SK-N-SH (cell line): ENCODE measurements at regions of chr7 and their contacts with region 1.

Region 1: GRCh38 chr7:76179686-76180085 is 22.0 kb upstream of the SRRM3 start:
- DNase-seq: no peak
- H3K4me3 ChIP-seq: no peak overlapping the region
- H3K27ac ChIP-seq: no peak overlapping the region
- H3K4me1 ChIP-seq: peaks cover 0 to 2% of the 10 kb centered on the region in 2 experiments; a peak in 1 of 4 replicates
- H3K27me3 ChIP-seq: no peaks in the 10 kb centered on the region
- CTCF ChIP-seq: no peak
- EP300 ChIP-seq: no peak
- RAD21 ChIP-seq: no peak

Region 2: GRCh38 chr7:76031964-76032363 is 147.7 kb before region 1 on chr7:
- CTCF ChIA-PET with region 1: no interaction called
- POLR2A ChIA-PET with region 1: no interaction called
- DNase-seq: no peak
- H3K4me3 ChIP-seq: no peak overlapping the region
- H3K27ac ChIP-seq: no peak overlapping the region
- H3K4me1 ChIP-seq: no peaks in the 10 kb centered on the region; a peak in 1 of 4 replicates
- H3K27me3 ChIP-seq: no peaks in the 10 kb centered on the region
- CTCF ChIP-seq: no peak
- EP300 ChIP-seq: no peak
- RAD21 ChIP-seq: no peak

Region 3: GRCh38 chr7:76142861-76143260 is 36.8 kb before region 1 on chr7:
- CTCF ChIA-PET with region 1: no interaction called
- POLR2A ChIA-PET with region 1: no interaction called
- DNase-seq: no peak
- H3K4me3 ChIP-seq: no peak overlapping the region
- H3K27ac ChIP-seq: no peak overlapping the region
- H3K4me1 ChIP-seq: no peaks in the 10 kb centered on the region
- H3K27me3 ChIP-seq: peaks cover 2% of the 10 kb centered on the region; the same call in 1 of the 2 replicates
- CTCF ChIP-seq: no peak
- EP300 ChIP-seq: no peak
- RAD21 ChIP-seq: no peak

Region 4: GRCh38 chr7:76191783-76192275 is 12.1 kb after region 1 on chr7:
- CTCF ChIA-PET with region 1: interaction called, 72 read pairs
- POLR2A ChIA-PET with region 1: interaction called, 3 read pairs
- DNase-seq: peak; percentile 72
- H3K4me3 ChIP-seq: no peak overlapping the region
- H3K27ac ChIP-seq: no peak overlapping the region
- H3K4me1 ChIP-seq: no peaks in the 10 kb centered on the region
- H3K27me3 ChIP-seq: peaks cover 4% of the 10 kb centered on the region; the same call in 1 of the 2 replicates
- CTCF ChIP-seq: no peak
- EP300 ChIP-seq: no peak
- RAD21 ChIP-seq: no peak

Region 5: GRCh38 chr7:76220185-76221057 is 40.7 kb after region 1 on chr7:
- CTCF ChIA-PET with region 1: interaction called, 27 read pairs
- POLR2A ChIA-PET with region 1: interaction called, 5 read pairs
- DNase-seq: peak; percentile 81
- H3K4me3 ChIP-seq: no peak overlapping the region
- H3K27ac ChIP-seq: peak overlapping the region in 1 of 2 experiments; percentile 36; a peak in 2 of 4 replicates
- H3K4me1 ChIP-seq: peaks cover 0 to 20% of the 10 kb centered on the region in 2 experiments; a peak in 1 of 4 replicates
- H3K27me3 ChIP-seq: peaks cover 28% of the 10 kb centered on the region; the same call in 1 of the 2 replicates
- CTCF ChIP-seq: no peak; the same call in 1 of the 2 replicates
- EP300 ChIP-seq: no peak; a peak in 1 of 4 replicates
- RAD21 ChIP-seq: peak; percentile 48

Region 6: DNA sequence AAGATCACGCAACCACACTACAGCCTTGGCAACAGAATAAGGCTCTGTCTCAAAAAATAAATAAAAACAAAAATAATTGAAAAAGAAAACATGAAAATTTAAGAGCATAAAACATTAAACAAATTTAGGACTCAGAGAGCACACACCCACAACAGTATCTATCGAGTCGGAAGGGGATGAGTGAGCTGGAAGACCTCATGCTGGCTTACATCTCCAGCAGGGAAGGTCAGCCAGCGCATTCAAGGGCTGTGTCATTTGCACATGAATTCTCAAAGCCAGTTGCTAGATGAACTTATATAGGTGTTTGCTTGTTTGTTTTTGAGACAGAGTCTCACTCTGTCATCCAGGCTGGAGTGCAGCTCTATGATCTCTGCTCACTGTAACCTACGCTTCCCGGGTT is 72.3 kb after region 1 on chr7:
- CTCF ChIA-PET with region 1: interaction called, 28 read pairs
- POLR2A ChIA-PET with region 1: interaction called, 7 read pairs
- DNase-seq: no peak
- H3K4me3 ChIP-seq: no peak overlapping the region
- H3K27ac ChIP-seq: peak overlapping the region in 1 of 2 experiments; percentile 87; a peak in 1 of 4 replicates
- H3K4me1 ChIP-seq: peaks cover 0 to 17% of the 10 kb centered on the region in 2 experiments; a peak in 1 of 4 replicates
- H3K27me3 ChIP-seq: no peaks in the 10 kb centered on the region
- CTCF ChIP-seq: no peak
- EP300 ChIP-seq: no peak
- RAD21 ChIP-seq: no peak

Region 7: DNA sequence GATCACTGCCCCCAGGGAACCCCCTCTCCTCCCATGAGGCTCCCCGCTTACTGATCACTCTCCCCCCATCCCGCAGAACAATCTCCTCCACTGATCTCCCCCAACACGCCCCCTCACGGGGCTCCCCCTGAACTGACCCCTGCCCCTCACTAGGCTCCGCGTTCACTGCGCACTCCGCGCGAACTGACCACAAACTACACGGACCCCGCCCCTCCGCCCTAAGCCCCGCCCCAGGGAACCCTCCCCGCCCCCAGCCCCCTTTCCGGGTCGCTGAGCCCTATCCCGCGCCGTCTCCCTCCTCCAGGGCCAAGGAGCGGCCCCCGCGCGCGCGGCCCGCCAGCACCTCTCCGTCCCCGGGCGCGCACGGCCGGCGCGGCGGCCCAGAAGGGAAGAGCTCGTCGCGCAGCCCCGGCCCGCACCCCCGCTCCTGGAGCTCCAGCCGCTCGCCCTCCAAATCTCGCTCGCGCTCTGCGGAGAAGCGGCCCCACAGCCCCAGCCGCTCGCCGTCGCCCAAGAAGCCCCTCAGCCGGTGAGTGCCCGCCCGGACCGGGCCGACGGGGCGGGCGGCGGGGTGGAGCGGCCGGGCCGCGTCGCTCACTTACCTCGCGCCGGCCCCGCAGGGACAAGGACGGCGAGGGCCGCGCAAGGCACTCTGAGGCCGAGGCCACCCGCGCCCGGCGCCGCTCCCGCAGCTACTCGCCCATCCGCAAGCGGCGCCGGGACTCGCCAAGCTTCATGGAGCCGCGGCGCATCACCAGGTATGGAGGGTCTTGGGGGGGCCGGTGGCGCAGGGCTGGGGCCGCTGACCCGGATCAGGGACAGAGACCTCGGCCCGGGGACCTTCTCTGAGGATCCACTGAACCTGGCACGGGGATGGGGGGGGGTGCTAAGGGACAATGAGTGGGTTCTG is 102.9 kb after region 1 on chr7:
- CTCF ChIA-PET with region 1: interaction called, 35 read pairs
- POLR2A ChIA-PET with region 1: no interaction called
- DNase-seq: peak; percentile 60
- H3K4me3 ChIP-seq: peak overlapping the region in 1 of 2 experiments; percentile 12; a peak in 1 of 4 replicates
- H3K27ac ChIP-seq: no peak overlapping the region
- H3K4me1 ChIP-seq: peaks cover 3 to 8% of the 10 kb centered on the region in 2 experiments; a peak in 2 of 4 replicates
- H3K27me3 ChIP-seq: no peaks in the 10 kb centered on the region
- CTCF ChIP-seq: no peak
- EP300 ChIP-seq: no peak
- RAD21 ChIP-seq: no peak

Region 8: DNA sequence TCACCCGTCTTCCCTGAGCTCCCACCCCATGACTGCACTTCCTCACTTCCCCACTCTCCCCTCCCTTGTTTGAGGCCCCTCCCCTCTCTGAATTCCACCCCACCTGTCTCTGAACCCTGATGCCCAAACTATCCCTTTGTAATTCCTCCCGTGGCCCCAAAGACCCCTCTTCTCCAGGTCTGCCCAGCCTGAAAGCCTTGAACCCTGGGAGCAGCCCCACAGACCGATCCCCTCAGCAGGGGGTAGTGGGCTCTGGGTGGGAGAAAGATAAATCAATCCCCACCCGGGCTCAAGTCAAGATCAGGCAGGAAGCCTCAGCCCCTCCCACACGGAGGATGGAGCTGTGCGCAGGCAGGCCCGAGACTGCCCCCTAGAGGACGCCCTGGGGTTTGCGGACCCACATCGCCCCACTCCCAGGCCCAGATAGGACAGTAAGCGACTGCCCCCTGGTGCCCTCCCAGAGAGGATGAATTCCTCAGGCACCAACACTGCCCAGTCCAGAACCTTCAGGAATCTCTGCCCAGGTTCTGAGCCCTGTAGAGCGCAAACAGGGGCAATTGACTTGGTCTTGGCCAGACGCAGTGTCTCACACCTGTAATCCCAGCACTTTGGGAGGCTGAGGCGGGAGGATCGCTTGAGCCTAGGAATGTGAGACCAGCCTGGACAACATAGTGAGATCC is 134.5 kb after region 1 on chr7:
- CTCF ChIA-PET with region 1: interaction called, 101 read pairs
- POLR2A ChIA-PET with region 1: interaction called, 6 read pairs
- DNase-seq: peak; percentile 97
- H3K4me3 ChIP-seq: no peak overlapping the region; a peak in 2 of 4 replicates
- H3K27ac ChIP-seq: no peak overlapping the region
- H3K4me1 ChIP-seq: peaks cover 4 to 26% of the 10 kb centered on the region in 2 experiments; a peak in 2 of 4 replicates
- H3K27me3 ChIP-seq: no peaks in the 10 kb centered on the region
- CTCF ChIP-seq: peak; percentile 100
- EP300 ChIP-seq: peak in 1 of 2 experiments; percentile 69; a peak in 3 of 4 replicates
- RAD21 ChIP-seq: peak; percentile 100